Activated CD8-positive, alpha-beta memory T cell treated with anti-CD3 and anti-CD28 coated beads, Interleukin-2, amount 10 ng/mL, durations not matched to agents 7 days and 5 days (primary cell): ENCODE measurements at regions of chr12 and their contacts with region 1.

Region 1: DNA sequence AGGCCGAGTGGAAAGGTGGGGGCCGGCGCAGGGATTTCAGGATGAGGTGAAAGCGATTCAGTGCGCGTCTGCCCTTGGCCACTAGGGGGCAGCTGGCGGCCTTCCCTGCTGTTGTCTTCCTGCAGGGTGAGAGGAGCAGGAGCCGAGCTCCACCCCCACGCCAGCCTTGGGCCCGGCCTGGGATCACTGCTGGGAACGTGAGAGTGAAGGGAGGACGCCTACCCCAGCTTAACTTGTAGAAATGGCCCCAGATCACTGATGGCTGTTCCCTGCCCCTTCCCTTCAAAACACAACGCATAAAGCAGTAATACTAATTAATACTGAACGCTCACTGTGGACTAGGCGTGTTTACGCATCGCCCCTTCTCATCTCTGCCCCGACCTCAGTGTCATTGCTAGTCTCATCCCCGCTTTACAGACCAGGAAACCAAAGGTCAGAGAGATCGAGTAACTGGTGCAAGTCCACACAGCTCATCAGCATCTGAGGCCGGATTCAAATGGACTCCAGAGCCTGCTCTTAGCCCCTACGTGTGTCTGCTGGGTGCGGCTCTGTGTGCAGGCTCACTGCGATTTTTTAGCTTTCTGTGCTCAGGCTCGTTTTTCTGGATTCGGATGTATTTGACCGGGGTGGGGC is 24.3 kb downstream of the MVK start:
- DNase-seq: peak; percentile 72
- ATAC-seq: peak; percentile 73
- H3K4me3 Mint-ChIP-seq: no peak overlapping the region
- H3K27ac Mint-ChIP-seq: no peak overlapping the region
- H3K4me1 Mint-ChIP-seq: peaks cover 26% of the 10 kb centered on the region
- H3K27me3 Mint-ChIP-seq: no peaks in the 10 kb centered on the region

Region 2: DNA sequence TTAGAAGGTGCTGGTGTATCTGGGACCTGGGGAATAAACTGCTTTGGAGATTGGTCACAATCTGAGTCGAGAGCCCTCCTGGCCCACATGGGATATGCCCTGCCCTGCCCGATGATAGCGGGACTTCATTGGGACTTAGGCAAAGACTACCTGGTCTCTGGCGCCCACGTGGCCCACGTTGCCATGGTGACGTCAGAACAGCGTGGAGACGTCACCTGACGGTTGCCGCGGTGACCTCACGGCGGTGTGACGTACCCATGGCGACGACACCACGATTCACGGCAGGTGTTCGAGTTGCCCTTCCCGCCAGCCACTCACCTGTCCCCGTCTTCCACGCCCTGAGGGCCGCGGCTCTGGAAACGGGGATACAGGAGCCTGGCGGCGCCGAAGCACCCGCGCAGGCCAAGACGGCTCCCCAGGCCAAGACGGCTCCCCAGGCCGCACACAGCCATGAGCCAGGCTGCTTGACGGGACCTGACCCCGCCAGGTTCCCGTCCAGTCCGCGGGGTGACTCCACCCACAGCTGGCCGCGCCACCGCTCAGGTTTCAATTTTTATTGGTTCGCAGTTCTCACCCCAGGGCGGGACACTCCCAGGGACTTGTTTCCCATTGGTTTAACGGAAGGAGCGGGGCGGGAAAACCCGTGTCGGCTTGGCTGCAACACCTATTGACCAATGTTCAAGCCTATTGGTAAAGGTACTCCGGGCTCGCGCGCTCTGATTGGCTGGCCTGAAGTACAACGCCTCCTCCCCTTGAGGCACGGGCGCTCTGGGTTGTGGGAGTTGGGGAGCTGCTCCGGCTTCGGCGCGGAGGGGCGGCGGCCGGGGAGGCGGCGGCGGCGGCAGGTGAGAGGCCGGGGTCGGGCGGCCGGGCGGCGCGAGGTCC is 24.6 kb before region 1 on chr12 and contains the starts of genes MMAB and MVK:
- CTCF ChIA-PET with region 1: interaction called, 19 read pairs
- DNase-seq: peak; percentile 100
- ATAC-seq: peak; percentile 97
- H3K4me3 Mint-ChIP-seq: peak within 1 kb of the TSS; percentile 85
- H3K27ac Mint-ChIP-seq: peak within 1 kb of the TSS; percentile 94
- H3K4me1 Mint-ChIP-seq: peaks cover 30% of the 10 kb centered on the region
- H3K27me3 Mint-ChIP-seq: no peaks in the 10 kb centered on the region
- total RNA-seq, gene MMAB: 35.4 to 40.9 TPM
- total RNA-seq, gene MVK: 21.7 to 27.4 TPM

Region 3: DNA sequence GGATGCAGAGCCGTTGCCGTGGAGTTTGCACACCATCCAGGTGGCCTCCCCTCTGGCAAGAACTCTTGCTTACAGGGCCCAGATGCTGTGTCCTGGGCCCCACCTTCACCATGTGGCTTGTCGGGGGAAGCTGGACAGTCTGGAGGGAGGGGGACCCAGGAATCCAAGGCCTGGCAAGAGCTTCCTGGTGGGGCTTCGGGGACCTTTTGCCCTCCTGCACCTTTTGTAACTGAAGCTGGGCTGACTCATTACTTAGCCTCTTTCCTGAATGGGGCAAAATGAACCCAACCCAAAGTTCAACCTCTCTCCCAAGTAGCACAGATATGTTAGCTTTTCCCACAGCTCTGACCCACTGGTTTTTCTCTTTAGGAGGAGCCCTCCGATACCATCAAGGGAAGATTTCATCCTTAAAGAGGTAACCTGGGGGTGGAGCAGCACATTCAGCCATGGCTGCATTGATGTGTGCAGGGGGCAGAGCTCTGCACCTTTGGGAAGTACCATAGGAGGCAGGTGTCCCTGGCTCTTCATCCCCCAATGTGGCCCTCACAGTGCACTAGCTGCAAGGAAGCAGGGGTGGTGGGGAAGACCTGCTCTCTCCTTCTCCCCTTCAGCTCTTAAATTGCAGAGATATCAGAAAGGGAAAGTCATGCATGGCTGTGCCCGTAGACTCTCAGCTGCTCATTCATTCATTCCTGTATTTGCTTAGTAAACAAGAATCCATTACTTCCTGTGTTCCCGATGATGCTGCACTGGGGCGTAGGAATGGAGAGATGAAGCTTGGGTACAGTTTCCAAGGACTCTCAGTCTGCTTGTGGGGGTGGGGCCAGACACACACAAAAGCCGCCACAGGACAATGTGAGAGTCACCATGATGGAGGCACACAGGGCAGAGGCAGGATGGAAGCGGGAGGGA is 11.3 kb before region 1 on chr12:
- CTCF ChIA-PET with region 1: interaction called, 16 read pairs
- DNase-seq: no peak
- ATAC-seq: no peak
- H3K4me3 Mint-ChIP-seq: no peak overlapping the region
- H3K27ac Mint-ChIP-seq: no peak overlapping the region
- H3K4me1 Mint-ChIP-seq: no peaks in the 10 kb centered on the region
- H3K27me3 Mint-ChIP-seq: no peaks in the 10 kb centered on the region

Region 4: GRCh38 chr12:109670731-109671130 is 72.8 kb after region 1 on chr12:
- CTCF ChIA-PET with region 1: no interaction called
- DNase-seq: no peak
- ATAC-seq: no peak
- H3K4me3 Mint-ChIP-seq: no peak overlapping the region
- H3K27ac Mint-ChIP-seq: no peak overlapping the region
- H3K4me1 Mint-ChIP-seq: no peaks in the 10 kb centered on the region
- H3K27me3 Mint-ChIP-seq: peaks cover 11% of the 10 kb centered on the region

Region 5: DNA sequence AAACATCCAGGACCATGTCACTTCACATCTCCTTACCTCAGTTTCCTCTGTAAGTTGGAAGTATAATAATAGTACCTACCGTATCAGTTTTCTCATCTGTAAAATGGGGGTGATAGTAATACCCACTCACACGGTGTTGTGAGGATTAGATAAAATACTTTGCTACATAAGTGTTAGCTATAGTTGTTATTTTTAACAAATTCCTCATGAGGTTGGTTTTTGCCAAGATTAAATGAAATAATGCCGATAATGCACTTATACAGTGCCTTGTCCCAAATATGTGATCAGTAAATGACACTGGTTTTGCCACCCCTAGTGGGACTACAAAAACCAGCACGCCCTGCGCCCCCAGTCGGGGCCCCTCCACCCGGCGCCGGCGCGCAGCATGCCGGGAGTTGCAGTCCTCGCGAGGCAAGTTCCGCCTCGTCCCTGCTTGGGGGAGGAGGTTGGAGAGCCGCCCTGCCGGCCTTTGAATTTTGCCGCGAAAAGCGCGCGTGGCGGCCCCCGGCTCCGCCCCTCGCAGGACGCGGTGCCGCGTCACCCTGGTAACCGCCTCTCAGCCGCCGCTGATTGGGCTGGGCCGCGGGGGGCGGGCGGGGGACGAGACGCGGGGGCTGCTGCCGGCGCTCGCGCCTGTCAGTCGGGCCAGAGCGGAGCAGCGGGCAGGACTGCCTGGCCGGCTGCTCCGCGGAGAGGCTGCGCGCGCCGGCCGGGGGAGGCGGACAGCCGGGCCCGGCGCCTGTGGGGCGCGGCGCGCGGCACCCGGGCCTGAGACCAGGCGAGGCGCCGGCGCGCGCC is 115.5 kb after region 1 on chr12 and contains the start of gene FAM222A:
- CTCF ChIA-PET with region 1: interaction called, 21 read pairs
- DNase-seq: peak; percentile 97
- ATAC-seq: peak; percentile 91
- H3K4me3 Mint-ChIP-seq: peak within 1 kb of the TSS; percentile 64
- H3K27ac Mint-ChIP-seq: no peak within 1 kb of the TSS
- H3K4me1 Mint-ChIP-seq: peaks cover 8% of the 10 kb centered on the region
- H3K27me3 Mint-ChIP-seq: peaks cover 57% of the 10 kb centered on the region
- total RNA-seq, gene FAM222A: 0.70 to 1.6 TPM